ENCODE measurements at regions of chr1 and their contacts with region 1.

Region 1: GRCh38 chr1:24027838-24028468 is 47.8 kb upstream of the SRSF10 start:
- DNase-seq: no peak
- ATAC-seq: peak in 3 of 4 donors; percentile 57 to 77 (median 73)
- H3K4me3 ChIP-seq: no peak overlapping the region
- H3K27ac ChIP-seq: no peak overlapping the region
- H3K4me1 ChIP-seq: peaks cover 0 to 10% (median 2%) of the 10 kb centered on the region in 12 donors
- H3K27me3 ChIP-seq: no peaks in the 10 kb centered on the region
- CTCF ChIP-seq: peak; percentile 44 to 81 (median 72)
- POLR2A ChIP-seq: no peak

Region 2: DNA sequence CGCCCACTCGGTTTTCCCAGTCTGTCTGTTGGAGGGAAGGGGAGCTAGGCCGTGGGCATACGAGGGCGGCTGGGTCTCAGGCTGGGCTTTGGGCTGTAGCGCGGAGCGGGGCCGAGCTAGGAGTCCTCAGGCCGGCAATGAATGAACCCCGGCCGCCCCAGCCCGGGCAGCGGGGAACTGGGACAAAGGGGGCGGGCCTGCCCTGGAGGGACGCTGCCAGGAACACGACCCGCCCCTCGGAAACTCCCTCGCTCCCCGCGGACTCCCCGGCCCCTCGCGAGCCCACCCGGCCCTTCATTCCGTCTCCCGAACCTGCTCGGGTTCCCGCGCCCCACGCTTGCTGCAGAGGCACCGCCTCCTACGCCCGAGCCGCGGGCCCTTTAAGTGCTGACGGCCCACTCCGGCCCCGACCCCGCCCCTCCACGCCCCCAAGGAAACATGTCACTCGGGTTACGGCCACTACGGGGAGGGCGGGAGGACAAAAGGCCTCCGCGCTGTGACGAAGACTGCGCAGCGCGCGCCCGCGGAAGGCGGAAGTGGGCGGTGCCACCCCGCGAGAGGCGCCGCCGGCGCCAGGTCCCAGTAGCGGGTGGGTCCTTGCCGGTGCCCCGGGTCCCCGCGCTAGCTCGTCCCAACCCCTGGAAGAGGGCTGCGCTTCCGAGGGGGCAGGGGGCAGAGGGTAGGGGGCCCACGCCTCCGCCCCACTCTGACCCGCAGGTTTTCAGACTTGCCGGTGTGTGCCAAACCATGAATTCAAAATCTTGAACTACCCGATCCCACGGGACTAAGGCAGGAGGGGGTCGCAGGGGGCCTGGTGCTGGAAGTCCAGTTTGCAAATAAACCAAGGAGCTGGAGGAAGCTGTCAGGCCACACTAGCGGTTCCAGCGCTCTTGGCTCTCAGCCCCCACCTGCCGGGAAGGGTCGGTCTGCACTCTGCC is 227.3 kb before region 1 on chr1 and contains the start of gene GALE:
- intact Hi-C with region 1: loop called in 3 of 10 experiments (anchors 10 kb)
- DNase-seq: peak; percentile 98 to 99 (median 98)
- ATAC-seq: peak; percentile 95 to 97 (median 96)
- H3K4me3 ChIP-seq: peak within 1 kb of the TSS; percentile 64 to 97 (median 80)
- H3K27ac ChIP-seq: peak within 1 kb of the TSS; percentile 84 to 97 (median 93)
- H3K4me1 ChIP-seq: peaks cover 3 to 23% (median 20%) of the 10 kb centered on the region in 12 donors
- H3K27me3 ChIP-seq: no peaks in the 10 kb centered on the region
- CTCF ChIP-seq: no peak
- POLR2A ChIP-seq: peak in 1 of 2 donors; percentile 80
- total RNA-seq, gene GALE: 6.2 to 13.8 (median 8.9) TPM

Region 3: DNA sequence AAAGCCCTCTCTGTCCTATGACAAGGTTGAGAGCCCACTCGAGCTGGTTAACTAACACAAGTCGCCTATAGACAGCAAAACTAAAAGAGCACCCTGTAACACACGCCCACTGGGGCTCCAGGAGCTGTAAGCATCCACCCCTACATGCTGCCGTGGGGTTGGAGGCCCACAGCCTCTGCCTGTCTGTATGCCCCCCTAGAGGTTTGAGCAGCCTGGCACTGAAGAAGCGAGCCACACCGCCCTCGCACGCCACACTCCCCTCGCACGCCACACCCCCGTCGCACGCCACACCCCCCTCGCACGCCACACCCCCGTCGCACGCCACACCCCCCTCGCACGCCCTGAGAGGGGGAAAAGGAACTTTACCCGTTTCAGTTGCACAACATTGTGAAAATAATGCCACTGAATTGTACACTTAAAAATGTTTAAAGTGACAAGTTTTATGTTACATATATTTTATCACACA is 189.5 kb before region 1 on chr1:
- intact Hi-C with region 1: no loop called
- DNase-seq: peak; percentile 48 to 85 (median 64)
- ATAC-seq: peak; percentile 88 to 99 (median 98)
- H3K4me3 ChIP-seq: peak overlapping the region in 10 of 12 donors; percentile 16 to 49 (median 40)
- H3K27ac ChIP-seq: no peak overlapping the region
- H3K4me1 ChIP-seq: peaks cover 0 to 12% (median 4%) of the 10 kb centered on the region in 12 donors
- H3K27me3 ChIP-seq: no peaks in the 10 kb centered on the region
- CTCF ChIP-seq: no peak
- POLR2A ChIP-seq: no peak

Region 4: DNA sequence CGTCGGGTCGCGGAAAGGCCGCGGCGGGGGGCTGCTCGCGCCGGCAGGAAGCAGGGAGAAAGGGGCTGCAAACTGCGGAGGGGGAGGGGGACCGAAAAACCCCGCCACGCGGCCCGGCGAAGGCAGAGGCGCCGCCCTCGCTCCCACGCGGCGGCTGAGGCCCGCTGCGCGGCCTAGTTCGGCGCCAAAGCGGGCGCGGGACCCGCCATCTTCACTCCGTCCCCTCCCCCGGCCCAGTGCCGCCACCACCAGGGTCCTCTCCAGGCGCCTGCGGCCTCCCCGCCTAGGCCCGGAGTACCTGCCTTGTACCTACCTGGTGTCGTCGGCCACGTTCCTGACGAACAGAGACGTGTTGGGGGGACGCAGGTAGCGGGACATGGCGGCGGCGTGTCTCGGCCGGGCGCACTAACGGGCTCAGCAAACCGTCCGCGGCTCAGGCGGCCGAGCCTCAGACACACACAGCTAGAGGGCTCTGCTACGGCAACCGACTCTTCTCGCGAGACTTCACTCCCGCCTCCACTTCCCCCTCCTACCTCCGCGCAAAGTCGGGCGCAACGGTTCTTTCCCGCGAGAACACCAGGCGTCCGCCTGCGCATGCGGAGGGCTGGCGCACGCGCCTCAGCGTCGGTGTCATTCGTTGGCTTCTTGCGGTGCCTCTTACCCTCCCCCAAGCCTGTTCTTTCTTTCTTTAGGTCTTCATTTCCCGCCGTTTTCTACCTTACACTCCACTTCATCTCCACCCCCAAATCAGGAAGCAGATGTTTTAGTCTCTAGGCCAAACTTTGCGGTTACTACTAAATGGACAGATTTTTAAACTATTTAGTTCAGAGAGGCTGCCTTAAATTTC is 47.9 kb before region 1 on chr1 and contains the start of gene SRSF10:
- intact Hi-C with region 1: loop called in 5 of 10 experiments (anchors 2 to 5 kb)
- DNase-seq: peak; percentile 99
- ATAC-seq: peak; percentile 98 to 100 (median 99)
- H3K4me3 ChIP-seq: peak within 1 kb of the TSS; percentile 69 to 97 (median 90)
- H3K27ac ChIP-seq: peak within 1 kb of the TSS; percentile 85 to 99 (median 97)
- H3K4me1 ChIP-seq: peaks cover 5 to 55% (median 40%) of the 10 kb centered on the region in 12 donors
- H3K27me3 ChIP-seq: no peaks in the 10 kb centered on the region
- CTCF ChIP-seq: peak; percentile 14 to 79 (median 40)
- POLR2A ChIP-seq: peak; percentile 95 to 97
- total RNA-seq, gene SRSF10: 34.3 to 60.9 (median 49.4) TPM